Right ventricle myocardium inferior (tissue), 1 donor: ENCODE measurements at regions of chr1 and their contacts with region 1.

Region 1: GRCh38 chr1:108158893-108159453 is 41.2 kb downstream of the SLC25A24 start:
- DNase-seq: no peak
- ATAC-seq: no peak

Region 2: DNA sequence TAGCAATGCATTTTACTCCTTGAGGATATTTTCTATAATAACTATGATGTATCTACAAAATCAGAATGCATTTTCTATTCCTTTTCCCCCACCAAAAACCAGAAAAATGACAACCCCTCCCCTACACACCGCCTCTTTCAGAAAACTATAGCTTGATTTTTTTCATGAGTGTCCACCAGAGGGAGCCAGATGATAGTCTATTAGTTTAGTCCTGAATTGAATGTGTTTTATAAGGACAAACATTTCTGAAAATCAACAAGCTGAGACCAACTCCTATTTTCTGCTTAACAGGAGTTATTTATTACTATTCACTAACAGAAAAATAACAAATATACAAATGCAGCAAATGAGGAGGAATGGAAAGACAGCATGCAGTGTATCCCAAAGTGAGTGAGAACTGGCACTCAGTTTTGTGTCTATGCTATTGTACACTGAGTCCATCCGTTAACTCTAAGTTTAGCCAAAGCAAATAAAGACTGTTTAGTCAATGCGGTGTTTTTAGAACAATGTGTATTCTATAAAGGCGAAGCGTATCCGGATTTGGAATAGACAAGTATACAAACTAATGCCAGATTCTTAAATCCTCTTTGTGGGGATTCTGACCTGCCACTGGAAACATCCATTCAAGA is 376.6 kb before region 1 on chr1:
- intact Hi-C with region 1: no loop called
- DNase-seq: no peak
- ATAC-seq: peak; percentile 52

Region 3: DNA sequence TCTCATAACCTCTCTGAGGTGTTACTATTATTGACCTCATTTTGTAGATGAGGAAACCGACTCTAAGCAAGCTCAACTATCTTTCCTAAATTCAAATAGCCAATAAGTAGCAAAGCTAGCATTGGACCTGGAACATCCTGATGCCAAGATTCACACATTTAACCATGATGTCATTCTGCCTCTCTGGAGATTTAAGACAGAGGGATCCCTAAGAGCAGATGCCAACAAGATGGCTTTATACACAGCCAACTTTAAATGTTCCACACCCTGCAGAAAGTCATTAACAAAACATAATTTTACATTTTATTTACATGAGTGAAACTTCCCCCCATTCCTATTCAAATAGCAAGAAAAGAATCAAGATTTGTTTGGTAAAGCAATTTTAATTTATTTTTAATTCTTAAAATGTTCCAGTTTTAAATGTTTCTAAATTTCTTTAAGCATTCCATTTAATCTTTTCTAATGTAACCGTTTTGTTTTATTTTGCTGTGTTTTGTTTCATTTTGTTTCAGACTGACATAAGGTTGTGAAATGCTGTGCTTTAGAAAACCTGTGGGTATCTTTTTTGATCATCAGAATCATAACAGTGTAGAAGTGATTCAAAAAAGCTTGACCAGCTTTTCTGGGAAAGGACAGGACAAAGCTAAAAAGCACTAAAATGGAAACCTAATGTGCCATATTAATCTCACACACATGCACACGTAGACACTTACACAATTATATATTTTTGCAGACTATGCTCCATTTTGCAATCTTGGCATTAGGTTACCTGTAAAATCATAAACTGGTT is 186.4 kb before region 1 on chr1:
- intact Hi-C with region 1: no loop called
- DNase-seq: no peak
- ATAC-seq: no peak

Region 4: GRCh38 chr1:108016451-108016920 is 142.5 kb before region 1 on chr1:
- intact Hi-C with region 1: no loop called
- DNase-seq: no peak
- ATAC-seq: peak; percentile 72

Region 5: DNA sequence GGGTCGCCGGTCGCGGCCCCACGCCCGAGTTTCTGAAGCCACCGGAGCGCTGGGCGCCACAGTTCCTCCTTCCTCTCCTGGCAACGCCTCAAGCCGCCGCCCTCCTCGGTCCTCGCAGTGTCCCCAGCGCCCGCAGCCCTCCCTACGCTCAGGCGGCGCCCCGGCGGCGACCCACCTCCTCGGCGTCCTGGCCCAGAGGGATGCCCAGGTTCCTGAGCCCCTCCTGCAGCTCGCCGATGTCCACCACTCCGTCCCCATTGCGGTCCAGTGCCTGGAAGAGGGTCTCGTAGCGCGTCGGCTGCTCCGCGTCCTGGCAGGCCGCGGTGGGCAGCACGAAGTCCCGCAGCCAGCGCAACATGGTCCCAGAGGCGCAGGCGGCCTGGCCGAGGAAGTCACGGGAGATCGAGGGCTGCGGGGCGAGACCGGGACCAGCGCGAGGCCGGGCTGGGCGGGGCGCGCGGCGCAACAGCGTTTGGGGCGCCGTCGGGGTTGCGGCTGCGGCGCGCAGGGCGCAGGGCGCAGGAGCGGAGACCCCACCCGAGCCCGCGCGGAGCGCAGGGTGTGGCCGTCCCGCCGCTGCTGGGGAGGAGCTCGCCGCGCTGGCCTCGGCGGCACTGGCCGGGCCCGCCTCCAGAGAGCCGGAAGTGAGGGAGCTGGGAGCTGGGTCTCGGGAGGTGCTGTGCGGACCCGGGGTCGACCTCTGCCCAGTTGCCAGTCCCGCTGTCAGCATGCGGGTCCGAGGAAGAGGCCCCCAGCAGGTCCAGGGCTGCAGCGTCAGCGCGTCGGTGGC is 41.0 kb after region 1 on chr1 and contains the start of gene SLC25A24:
- intact Hi-C with region 1: loop called (anchors 5 kb)
- DNase-seq: peak; percentile 93
- ATAC-seq: peak; percentile 98
- total RNA-seq, gene SLC25A24: 18.5 TPM

Region 6: DNA sequence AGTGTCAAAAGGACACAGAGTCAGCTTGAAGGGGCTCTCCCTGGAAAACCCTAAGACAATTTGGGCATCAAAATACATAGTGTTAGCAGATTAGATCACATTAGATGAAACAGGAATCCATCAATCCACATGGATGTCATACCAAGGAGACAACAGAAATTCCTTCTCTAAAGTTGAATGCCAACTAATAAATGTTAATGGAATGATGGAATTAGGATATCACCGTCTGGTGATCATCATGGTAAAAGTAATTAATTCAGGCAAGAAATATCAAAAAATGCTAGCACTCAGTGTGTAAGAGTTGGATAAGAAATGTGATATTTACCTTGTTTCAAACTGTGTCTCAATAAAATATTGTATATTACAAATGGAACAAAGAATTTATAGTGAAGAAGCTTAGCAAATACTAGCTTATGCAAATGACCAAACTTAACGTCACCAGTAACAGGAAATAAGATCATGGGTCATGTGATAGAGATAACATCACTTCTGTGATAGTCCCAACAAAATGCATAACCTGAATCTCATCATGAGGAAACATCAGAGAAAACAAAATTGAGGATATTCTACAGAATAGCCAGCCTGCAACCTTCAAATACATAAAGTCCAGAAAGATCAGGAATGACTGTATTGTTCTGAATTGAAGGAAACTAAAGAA is 52.2 kb after region 1 on chr1:
- intact Hi-C with region 1: no loop called
- DNase-seq: no peak
- ATAC-seq: no peak